ENCODE measurements at regions of chr7 and their contacts with region 1.

Region 1: GRCh38 chr7:138755327-138755747 is 42.5 kb upstream of the TMEM213 start:
- H3K4me3 ChIP-seq: no peak overlapping the region
- H3K27ac ChIP-seq: no peak overlapping the region
- H3K4me1 ChIP-seq: no peaks in the 10 kb centered on the region
- CTCF ChIP-seq: no peak

Region 2: DNA sequence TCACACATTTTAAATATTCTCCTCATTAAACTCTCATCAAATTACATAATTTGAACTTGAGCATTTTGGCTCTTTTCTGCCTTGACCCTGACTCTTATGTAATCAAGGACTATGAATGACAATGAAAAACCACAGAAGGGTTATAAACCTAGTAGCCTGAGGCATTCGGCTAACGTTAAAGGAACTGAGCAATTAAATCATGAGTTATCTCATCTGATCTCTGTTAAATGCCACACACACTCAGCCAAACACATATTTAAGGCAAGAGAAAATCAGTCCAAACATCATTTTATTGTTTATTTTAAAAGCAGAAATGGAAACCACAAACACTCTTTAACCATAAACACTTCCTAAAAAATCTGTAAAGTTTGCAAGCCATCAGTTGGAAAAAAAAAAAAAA is 1112.9 kb before region 1 on chr7:
- CTCF ChIA-PET with region 1: no interaction called
- POLR2A ChIA-PET with region 1: interaction called, 11 read pairs
- H3K4me3 ChIP-seq: no peak overlapping the region
- H3K27ac ChIP-seq: no peak overlapping the region
- H3K4me1 ChIP-seq: no peaks in the 10 kb centered on the region
- CTCF ChIP-seq: no peak

Measured in HEK293 (cell line).